GM10248 (cell line): ENCODE measurements at regions of chr10 and their contacts with region 1.

Region 1: DNA sequence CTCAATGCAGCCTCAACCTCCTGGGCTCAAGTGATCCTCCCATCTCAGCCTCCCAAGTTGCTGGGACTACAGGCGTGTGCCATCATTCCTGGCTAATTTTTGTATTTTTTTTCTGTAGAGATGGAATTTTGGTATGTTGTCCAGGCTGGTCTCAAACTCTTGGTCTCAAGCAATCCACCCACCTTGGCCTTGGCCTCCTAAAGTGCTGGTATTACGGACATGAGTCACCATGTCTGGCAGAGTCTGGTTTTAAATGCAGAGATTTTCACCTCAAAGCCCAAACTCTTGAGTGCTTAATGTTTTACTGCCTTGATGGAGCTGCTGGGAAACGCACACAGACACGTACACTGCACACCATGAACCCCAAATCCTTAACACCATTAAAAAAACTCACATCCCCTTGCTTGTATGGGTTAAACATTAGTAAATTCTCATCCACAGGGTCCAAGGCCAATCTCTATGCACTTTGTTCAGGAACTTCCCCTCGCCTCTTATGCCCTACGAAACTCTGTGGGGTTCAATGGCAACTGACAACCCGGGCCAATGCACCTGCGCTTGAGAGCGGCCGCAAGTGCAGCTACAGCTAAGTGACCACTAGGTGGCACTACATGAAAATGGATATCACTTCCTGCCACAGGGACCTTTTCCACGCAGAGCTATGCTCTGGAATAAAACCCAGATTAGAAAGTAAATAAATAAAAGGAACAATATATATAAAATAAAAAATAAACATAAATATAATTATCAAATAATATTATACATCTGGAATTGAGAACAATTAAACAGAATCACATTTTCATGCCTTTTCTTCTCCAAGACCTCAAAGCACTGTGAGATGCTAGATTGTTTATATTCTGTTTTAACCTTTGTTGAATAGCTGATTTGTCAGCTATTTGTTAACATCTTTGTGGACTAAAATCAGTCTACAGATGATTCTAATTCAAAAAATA is 66.9 kb upstream of the AFAP1L2 start:
- DNase-seq: peak; percentile 71
- CTCF ChIP-seq: peak; percentile 97

Region 2: GRCh38 chr10:114367041-114367818 is 104.0 kb before region 1 on chr10:
- CTCF ChIA-PET with region 1: no interaction called
- POLR2A ChIA-PET with region 1: no interaction called
- DNase-seq: no peak
- CTCF ChIP-seq: no peak

Region 3: DNA sequence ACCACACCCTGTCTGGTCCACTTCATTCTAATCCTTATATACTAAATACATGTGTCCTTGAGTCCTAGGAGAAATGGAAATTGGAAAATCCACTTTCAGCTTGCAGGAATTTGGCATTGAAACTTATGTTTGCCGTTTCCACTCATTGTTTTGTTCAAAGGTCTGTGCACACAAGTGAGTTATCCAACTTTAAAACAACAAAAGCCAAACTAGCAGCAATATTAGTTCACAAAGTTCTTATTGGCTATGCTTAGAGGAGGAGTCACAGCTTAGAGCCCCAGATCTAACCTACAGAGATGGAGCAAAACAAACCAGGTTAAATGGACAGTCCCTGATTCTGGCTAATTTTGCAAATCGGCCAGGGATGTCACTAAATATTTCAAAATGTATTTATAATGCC is 22.3 kb before region 1 on chr10:
- CTCF ChIA-PET with region 1: interaction called, 14 read pairs
- POLR2A ChIA-PET with region 1: interaction called, 9 read pairs
- DNase-seq: no peak
- CTCF ChIP-seq: no peak

Region 4: GRCh38 chr10:114486938-114487814 is 15.9 kb after region 1 on chr10:
- CTCF ChIA-PET with region 1: interaction called, 17 read pairs
- POLR2A ChIA-PET with region 1: no interaction called
- DNase-seq: no peak
- CTCF ChIP-seq: no peak

Region 5: DNA sequence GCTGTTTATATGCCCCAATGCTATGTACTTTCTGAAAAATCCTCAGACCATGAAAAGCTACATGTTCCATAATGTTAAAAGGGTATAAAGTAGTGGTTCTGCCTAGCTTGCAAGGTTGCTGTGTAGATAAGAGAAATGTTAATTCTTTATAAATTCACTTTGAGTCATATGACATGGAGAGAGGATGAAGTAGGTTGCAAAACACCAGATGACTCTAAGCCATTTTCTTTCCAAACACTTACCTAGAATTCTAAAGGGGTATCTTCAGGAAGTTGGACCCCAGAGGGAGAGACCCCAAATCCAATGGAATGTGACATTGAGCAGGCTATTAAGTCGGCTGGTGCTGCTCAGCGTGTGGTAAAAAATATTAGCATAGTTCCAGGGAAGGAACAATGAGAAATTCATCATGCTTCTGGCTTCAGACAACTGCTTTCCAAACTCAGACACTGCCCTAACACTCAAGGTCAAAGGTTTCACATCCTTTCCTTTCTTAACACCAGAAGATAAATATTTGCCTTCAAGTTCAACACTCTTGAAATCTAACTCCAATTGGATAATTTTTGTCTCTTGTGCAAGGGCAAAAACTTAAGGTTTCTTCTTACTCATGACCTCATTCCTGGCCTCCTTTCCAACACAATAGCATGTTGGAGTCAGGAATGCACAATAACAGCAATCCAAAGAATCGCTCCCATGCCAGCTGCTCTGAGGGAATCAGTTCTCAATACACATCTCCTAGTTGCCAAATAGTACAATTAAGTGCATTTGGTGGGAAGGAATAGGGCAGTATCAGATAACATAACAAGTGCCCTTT is 33.7 kb after region 1 on chr10:
- CTCF ChIA-PET with region 1: interaction called, 38 read pairs
- POLR2A ChIA-PET with region 1: no interaction called
- DNase-seq: no peak
- CTCF ChIP-seq: no peak

Region 6: DNA sequence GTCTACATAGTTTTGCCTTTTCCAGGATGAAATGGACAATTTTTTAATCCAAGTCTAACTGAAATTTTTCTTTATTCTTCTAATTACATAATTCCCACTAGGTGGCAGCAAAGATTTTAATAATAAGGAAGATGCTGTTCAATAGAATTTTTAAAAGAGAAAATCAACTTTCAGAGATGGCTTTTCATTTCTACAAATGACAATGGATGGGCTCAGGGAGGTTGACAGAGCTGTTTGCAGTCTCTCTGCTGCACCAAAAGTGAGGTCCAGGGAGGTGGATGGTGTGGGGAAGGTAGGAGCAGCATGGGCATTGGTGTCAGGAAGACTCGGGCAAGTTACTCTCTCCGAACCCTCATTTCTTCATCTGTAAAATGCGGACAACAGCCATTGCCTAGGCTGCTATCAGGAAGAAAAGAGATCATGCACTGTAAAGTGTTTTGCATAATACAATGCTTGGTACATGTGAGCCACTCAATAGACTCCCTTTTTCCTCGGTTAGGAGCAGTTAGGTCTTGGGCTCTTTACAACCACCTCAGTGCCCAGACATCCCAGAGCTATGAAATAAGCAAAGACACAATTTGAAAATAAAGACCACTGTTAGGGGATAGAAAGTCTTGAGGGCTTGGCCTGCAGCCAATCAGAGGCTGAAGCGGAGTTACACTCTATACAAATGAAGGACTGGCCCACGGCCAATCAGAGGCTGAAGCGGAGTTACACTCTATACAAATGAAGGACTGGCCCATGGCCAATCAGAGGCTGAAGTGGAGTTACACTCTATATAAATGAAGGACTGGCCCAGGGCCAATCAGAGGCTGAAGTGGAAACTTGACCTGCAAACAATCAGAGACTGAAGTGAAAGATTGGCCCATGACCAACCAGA is 79.8 kb after region 1 on chr10:
- CTCF ChIA-PET with region 1: interaction called, 93 read pairs
- POLR2A ChIA-PET with region 1: no interaction called
- DNase-seq: no peak
- CTCF ChIP-seq: peak; percentile 40

Region 7: GRCh38 chr10:114694752-114695151 is 223.5 kb after region 1 on chr10:
- CTCF ChIA-PET with region 1: interaction called, 25 read pairs
- POLR2A ChIA-PET with region 1: no interaction called
- DNase-seq: peak; percentile 40
- CTCF ChIP-seq: peak; percentile 51